ENCODE measurements at regions of chr4 and their contacts with region 1.

Region 1: GRCh38 chr4:112636688-112637551 is at the starts of genes LARP7 and ZGRF1:
- DNase-seq: peak; percentile 99
- ATAC-seq: peak; percentile 99
- total RNA-seq, gene LARP7: 51.6 TPM
- total RNA-seq, gene ZGRF1: 10.6 TPM

Region 2: GRCh38 chr4:112765317-112765975 is 128.5 kb after region 1 on chr4:
- intact Hi-C with region 1: loop called (anchors 5 kb)
- DNase-seq: no peak
- ATAC-seq: no peak

Region 3: GRCh38 chr4:112938461-112939058 is 301.6 kb after region 1 on chr4:
- intact Hi-C with region 1: loop called (anchors 5 kb)
- DNase-seq: no peak
- ATAC-seq: no peak

Region 4: GRCh38 chr4:113945906-113946305 is 1309.0 kb after region 1 on chr4:
- intact Hi-C with region 1: no loop called
- DNase-seq: no peak
- ATAC-seq: no peak

Measured in sciatic nerve (tissue), 2 donors.